Right ventricle myocardium inferior (tissue), 1 donor: ENCODE measurements at regions of chr2 and their contacts with region 1.

Region 1: GRCh38 chr2:16608661-16609643 is 56.7 kb downstream of the CYRIA start:
- DNase-seq: peak; percentile 92
- ATAC-seq: peak; percentile 87

Region 2: GRCh38 chr2:15939854-15940660 is 668.9 kb before region 1 on chr2 and contains the start of gene MYCN:
- intact Hi-C with region 1: loop called (anchors 2 kb)
- DNase-seq: no peak
- ATAC-seq: peak; percentile 19
- total RNA-seq, gene MYCN: 0.54 TPM

Region 3: GRCh38 chr2:16553226-16553625 is 55.7 kb before region 1 on chr2:
- intact Hi-C with region 1: loop called (anchors 1 kb)
- DNase-seq: no peak
- ATAC-seq: no peak

Region 4: DNA sequence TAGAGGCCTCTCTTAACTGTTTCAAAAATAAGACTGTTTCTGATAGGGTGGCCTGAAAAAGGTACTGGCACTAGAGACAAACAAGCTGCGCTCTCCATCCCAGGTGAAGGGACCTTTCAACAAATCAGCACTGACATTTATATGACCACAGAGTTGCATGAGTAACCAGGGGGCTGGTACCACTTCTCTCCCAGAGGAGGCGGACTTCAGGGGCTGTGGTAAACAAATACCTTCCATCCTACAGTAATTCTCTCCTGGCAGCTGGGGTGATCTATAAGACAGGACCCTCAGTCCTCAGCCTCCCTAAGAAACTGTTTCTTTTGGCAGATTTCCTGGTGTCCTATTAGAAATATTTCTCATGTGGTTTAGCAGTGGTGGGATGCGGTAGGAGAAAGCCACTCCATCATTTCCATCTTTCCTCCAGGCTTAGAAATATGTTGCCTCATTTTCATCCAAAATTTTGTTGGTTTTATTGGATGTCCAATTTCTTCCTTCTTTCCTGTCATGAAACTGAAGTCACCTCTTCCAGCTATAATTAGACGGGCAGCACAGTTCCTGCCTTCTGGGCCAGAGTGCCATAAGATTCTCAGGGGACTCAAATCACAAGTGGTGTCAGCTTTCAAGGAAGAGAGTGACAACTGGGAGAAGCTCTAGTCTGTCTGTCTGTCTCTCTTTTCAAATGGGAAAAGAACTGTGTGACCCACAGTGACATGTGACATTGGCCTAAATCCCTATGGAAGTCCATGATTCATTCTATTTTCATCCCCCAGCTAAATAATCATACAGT is 39.8 kb before region 1 on chr2:
- intact Hi-C with region 1: loop called (anchors 5 kb)
- DNase-seq: no peak
- ATAC-seq: peak; percentile 69

Region 5: GRCh38 chr2:16665748-16666448 is 56.9 kb after region 1 on chr2 and contains the start of gene CYRIA:
- intact Hi-C with region 1: loop called (anchors 2 kb)
- DNase-seq: peak; percentile 86
- ATAC-seq: peak; percentile 83
- total RNA-seq, gene CYRIA: 5.1 TPM

Region 6: GRCh38 chr2:16727256-16727655 is 118.3 kb after region 1 on chr2:
- intact Hi-C with region 1: loop called (anchors 10 kb)
- DNase-seq: no peak
- ATAC-seq: peak; percentile 34

Region 7: DNA sequence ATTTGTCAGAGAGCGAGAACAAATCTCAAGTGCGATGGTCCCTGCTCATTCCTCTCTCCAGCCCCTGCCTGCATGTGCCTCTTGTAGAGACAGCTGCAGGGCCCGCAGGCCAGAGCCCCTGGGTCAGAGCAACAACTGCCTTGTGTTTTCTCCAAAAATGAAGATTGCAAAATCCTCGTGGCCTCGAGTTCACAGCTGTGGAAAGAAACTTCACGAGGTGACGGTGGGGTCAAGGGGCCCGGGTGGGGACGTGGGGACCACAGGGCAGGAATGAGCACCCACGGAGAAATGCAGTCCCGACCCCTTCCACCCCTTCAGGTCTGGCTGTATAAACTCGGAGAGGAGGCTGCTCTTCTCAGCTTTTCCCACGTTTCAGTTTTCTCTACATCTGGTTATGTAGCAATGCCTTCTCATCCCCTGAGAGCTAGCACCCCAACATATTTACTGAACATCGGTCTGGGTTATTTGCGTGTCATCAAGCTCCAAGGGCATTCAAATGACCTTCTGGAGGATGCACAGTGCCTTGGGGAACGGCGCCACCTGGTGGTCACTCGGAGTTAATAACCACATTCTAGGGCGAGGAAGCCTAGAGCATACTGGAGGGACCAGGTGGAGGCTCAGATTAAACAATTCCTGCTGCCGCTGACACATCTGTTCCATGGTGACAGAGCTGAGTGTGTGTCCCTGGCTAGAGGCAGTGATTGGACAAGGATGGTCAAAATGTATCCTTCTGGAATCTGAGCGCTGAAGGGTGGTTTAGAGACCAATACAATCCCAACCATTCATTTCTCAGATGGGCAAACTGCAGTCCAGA is 148.1 kb after region 1 on chr2:
- intact Hi-C with region 1: loop called (anchors 1 kb)
- DNase-seq: peak; percentile 91
- ATAC-seq: peak; percentile 87